Natural killer cell (primary cell): ENCODE measurements at regions of chr2 and their contacts with region 1.

Region 1: DNA sequence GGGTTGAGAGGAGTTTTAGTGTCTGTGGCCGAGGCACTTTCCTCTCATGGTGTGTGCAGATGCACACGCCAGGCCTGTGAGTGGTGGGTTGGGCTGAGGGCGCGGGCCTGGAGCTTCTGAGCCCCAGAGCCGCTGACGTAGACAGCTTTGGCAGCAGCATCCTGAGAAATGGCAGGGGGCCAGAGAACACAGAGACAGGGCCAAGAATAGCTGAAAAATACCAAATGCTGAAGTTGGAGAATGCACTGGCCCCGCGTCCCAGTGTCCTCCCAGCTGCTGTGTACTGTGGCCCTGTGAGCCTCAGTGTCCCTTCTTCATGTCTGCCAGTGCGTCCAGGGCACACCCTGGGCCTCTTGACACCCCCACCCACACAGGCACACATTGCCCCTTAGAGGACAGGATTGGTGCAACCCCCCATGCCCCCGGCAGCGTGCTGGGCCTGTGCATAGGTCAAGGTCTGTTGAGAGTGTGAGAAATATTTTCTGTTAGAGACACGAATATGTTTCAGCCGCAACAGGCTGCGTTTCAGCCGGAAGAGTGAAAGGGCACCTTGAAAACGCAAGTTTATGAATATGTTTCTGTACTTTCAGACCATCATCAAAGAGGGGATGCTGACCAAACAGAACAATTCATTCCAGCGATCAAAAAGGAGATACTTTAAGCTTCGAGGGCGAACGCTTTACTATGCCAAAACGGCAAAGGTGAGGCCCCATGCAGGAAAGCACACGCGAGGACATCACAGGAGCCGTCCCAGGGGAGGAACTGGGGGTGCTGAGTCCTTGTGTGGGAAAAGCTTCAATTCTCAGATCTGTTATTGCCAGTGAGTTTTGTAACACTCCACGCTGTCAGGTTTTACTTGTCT is 33.6 kb downstream of the DGKD start:
- DNase-seq: peak in 1 of 2 donors; percentile 48
- ATAC-seq: no peak
- H3K4me3 ChIP-seq: no peak overlapping the region
- H3K4me3 Mint-ChIP-seq: peak overlapping the region; percentile 87
- H3K27ac ChIP-seq: peak overlapping the region; percentile 64
- H3K27ac Mint-ChIP-seq: peak overlapping the region; percentile 91 to 93
- H3K4me1 ChIP-seq: peaks cover 66% of the 10 kb centered on the region
- H3K4me1 Mint-ChIP-seq: peaks cover 67 to 78% of the 10 kb centered on the region in 2 donors
- H3K27me3 ChIP-seq: no peaks in the 10 kb centered on the region
- H3K27me3 Mint-ChIP-seq: no peaks in the 10 kb centered on the region
- CTCF ChIP-seq: no peak

Region 2: DNA sequence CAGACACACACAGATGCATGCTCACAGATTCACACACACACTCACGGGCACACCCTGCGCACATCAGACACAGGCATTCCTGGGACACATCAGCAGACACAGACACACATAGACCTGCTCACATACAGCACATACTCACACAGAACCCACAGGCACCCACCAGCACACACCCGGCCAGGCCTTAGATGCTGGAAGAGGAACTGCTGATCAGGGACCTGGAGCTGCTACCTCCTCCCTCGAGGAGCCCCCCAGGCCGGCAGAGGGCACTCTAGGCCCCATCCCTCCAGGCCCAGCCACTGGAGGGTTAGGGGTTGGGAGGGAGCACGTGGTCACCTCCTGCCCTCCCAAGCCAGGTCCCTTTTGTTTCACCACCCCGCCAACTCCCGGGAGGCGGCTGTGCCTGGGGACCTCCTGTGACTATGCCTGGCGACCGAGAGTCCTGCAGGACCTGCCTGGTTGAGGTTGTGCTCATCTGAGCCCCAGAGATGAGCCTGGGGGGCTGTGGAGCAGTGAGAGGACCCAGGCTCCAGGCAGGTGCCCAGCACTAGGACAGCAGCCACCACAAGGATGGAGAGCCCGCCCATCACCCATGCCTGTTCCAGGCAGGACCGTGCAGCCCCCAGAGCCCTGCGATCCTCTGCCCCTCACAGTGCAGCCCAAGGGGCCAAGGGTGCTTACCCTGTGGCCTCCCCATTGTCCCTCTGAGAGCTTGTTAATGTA is 1700.6 kb before region 1 on chr2:
- intact Hi-C with region 1: no loop called
- DNase-seq: peak; percentile 57 to 78
- ATAC-seq: peak; percentile 69 to 96 (median 95)
- H3K4me3 ChIP-seq: no peak overlapping the region
- H3K4me3 Mint-ChIP-seq: no peak overlapping the region
- H3K27ac ChIP-seq: no peak overlapping the region
- H3K27ac Mint-ChIP-seq: no peak overlapping the region
- H3K4me1 ChIP-seq: peaks cover 7% of the 10 kb centered on the region
- H3K4me1 Mint-ChIP-seq: peaks cover 0 to 6% of the 10 kb centered on the region in 2 donors
- H3K27me3 ChIP-seq: no peaks in the 10 kb centered on the region
- H3K27me3 Mint-ChIP-seq: peaks cover 0 to 5% of the 10 kb centered on the region in 2 donors
- CTCF ChIP-seq: peak; percentile 48

Region 3: DNA sequence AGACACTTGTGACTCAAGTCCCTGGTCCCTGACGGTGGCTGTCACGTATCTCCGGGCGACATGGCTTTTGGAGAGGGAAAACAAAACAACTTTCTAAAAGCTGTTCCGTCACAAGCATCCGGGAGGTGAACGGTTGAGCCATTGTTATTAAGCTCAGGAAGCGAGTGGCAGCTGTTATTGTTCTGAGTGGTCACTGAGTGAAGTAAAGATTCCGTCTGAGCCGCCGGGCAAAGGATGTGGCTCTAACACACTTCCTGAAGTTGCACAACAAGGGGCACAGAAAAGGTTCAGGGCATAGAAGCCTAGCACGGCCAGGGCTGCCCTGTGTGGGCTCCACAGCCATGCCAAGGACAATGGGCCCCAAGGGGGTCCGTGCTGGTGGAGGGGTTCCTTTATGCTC is 303.4 kb before region 1 on chr2:
- intact Hi-C with region 1: loop called (anchors 10 kb)
- DNase-seq: peak; percentile 64 to 74
- ATAC-seq: peak; percentile 61 to 81 (median 76)
- H3K4me3 ChIP-seq: peak overlapping the region; percentile 3
- H3K4me3 Mint-ChIP-seq: peak overlapping the region; percentile 89
- H3K27ac ChIP-seq: peak overlapping the region; percentile 85
- H3K27ac Mint-ChIP-seq: no peak overlapping the region
- H3K4me1 ChIP-seq: peaks cover 98% of the 10 kb centered on the region
- H3K4me1 Mint-ChIP-seq: peaks cover 94 to 96% of the 10 kb centered on the region in 2 donors
- H3K27me3 ChIP-seq: no peaks in the 10 kb centered on the region
- H3K27me3 Mint-ChIP-seq: no peaks in the 10 kb centered on the region
- CTCF ChIP-seq: no peak

Region 4: GRCh38 chr2:233331536-233331935 is 56.4 kb before region 1 on chr2:
- intact Hi-C with region 1: loop called (anchors 10 kb)
- DNase-seq: peak; percentile 69 to 94
- ATAC-seq: peak; percentile 94 to 95 (median 95)
- H3K4me3 ChIP-seq: no peak overlapping the region
- H3K4me3 Mint-ChIP-seq: peak overlapping the region; percentile 83
- H3K27ac ChIP-seq: peak overlapping the region; percentile 97
- H3K27ac Mint-ChIP-seq: peak overlapping the region; percentile 97
- H3K4me1 ChIP-seq: peaks cover 60% of the 10 kb centered on the region
- H3K4me1 Mint-ChIP-seq: peaks cover 46 to 61% of the 10 kb centered on the region in 2 donors
- H3K27me3 ChIP-seq: no peaks in the 10 kb centered on the region
- H3K27me3 Mint-ChIP-seq: no peaks in the 10 kb centered on the region
- CTCF ChIP-seq: no peak

Region 5: GRCh38 chr2:233418761-233419625 is 31.1 kb after region 1 on chr2:
- intact Hi-C with region 1: loop called (anchors 5 kb)
- DNase-seq: peak; percentile 37 to 81
- ATAC-seq: peak; percentile 59 to 66 (median 65)
- H3K4me3 ChIP-seq: peak overlapping the region; percentile 24
- H3K4me3 Mint-ChIP-seq: peak overlapping the region; percentile 90
- H3K27ac ChIP-seq: peak overlapping the region; percentile 79
- H3K27ac Mint-ChIP-seq: peak overlapping the region; percentile 88 to 89
- H3K4me1 ChIP-seq: peaks cover 85% of the 10 kb centered on the region
- H3K4me1 Mint-ChIP-seq: peaks cover 84 to 85% of the 10 kb centered on the region in 2 donors
- H3K27me3 ChIP-seq: no peaks in the 10 kb centered on the region
- H3K27me3 Mint-ChIP-seq: no peaks in the 10 kb centered on the region
- CTCF ChIP-seq: no peak

Region 6: GRCh38 chr2:233611284-233611683 is 223.4 kb after region 1 on chr2:
- intact Hi-C with region 1: no loop called
- DNase-seq: no peak
- ATAC-seq: no peak
- H3K4me3 ChIP-seq: no peak overlapping the region
- H3K4me3 Mint-ChIP-seq: no peak overlapping the region
- H3K27ac ChIP-seq: no peak overlapping the region
- H3K27ac Mint-ChIP-seq: no peak overlapping the region
- H3K4me1 ChIP-seq: no peaks in the 10 kb centered on the region
- H3K4me1 Mint-ChIP-seq: no peaks in the 10 kb centered on the region
- H3K27me3 ChIP-seq: no peaks in the 10 kb centered on the region
- H3K27me3 Mint-ChIP-seq: peaks cover 35 to 67% of the 10 kb centered on the region in 2 donors
- CTCF ChIP-seq: no peak

Region 7: GRCh38 chr2:234218266-234219180 is 830.6 kb after region 1 on chr2:
- intact Hi-C with region 1: no loop called
- DNase-seq: peak in 1 of 2 donors; percentile 37
- ATAC-seq: no peak
- H3K4me3 ChIP-seq: no peak overlapping the region
- H3K4me3 Mint-ChIP-seq: no peak overlapping the region
- H3K27ac ChIP-seq: no peak overlapping the region
- H3K27ac Mint-ChIP-seq: no peak overlapping the region
- H3K4me1 ChIP-seq: no peaks in the 10 kb centered on the region
- H3K4me1 Mint-ChIP-seq: peaks cover 14 to 18% of the 10 kb centered on the region in 2 donors
- H3K27me3 ChIP-seq: no peaks in the 10 kb centered on the region
- H3K27me3 Mint-ChIP-seq: no peaks in the 10 kb centered on the region
- CTCF ChIP-seq: no peak